MCF 10A (cell line): ENCODE measurements at regions of chr3 and their contacts with region 1.

Region 1: DNA sequence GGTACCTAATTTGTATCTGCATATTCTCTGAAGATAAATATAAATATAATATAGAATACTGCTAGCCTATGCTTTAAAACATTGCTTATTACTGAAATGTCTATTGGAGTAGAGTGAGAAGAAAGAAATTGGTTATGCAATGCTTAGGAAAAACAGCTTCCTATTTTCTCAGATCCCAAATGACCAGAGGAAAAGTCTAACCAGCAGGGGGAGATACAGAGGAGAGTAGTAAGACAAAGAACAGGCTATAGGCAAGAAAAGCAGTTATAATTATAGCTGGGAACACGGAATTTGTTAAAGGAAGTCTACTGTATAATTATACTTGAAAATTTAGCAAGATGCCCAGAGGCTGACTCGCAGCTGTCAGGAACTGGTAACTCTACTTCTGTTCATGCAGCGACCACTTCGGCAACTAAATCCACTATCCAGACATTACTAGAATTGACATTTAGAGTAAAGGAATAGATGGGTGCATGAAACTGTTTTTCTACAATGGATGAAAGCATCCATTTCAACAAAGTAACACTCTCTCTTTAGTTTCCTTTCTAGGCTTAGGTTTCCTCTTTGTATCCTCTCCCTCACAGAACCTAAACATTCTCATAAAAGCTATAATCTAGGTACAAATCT is 97.2 kb downstream of the TBC1D5 start:
- DNase-seq: peak; percentile 81
- H3K4me3 Mint-ChIP-seq: no peak overlapping the region
- H3K27ac Mint-ChIP-seq: no peak overlapping the region
- H3K4me1 Mint-ChIP-seq: no peaks in the 10 kb centered on the region
- H3K27me3 Mint-ChIP-seq: no peaks in the 10 kb centered on the region
- CTCF ChIP-seq: peak; percentile 56

Region 2: DNA sequence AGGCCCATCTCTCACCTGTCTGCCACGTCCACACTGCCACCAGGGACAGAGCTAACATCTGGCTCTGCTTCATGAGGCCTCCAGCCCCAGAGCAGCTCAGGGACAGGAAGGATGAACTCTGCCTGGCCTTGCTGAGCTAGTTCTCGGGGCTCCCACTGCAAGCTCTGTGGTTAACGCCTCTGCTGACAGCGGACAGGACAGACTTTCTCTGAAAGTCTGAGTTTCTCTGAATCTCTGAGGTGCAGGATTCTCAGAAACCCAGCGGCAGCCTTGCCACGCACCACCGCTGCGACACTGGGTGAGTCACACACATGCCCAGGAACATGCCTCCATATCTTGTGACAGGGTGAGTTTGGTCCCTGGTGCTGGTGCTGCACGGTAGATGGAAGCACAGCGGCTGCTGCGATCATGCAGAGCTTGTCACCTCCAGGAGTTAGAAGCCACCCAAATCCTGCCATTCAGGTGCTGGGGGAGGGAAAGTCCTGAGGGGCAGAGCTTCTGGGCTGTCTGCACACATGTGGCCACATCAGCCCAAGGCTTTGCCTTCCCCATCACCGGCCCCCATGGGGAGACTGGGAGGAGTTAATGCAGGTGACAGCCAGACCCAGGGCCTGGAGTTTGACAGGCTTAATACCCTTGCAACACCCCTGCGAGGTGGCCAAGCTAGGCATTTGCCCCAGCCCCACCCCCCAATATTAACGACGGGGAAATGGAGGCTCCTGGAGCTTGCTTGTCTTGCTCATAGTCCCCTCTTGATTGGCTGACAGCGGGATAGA is 493.4 kb before region 1 on chr3:
- CTCF ChIA-PET with region 1: no interaction called
- POLR2A ChIA-PET with region 1: no interaction called
- intact Hi-C with region 1: no loop called
- DNase-seq: no peak
- H3K4me3 Mint-ChIP-seq: no peak overlapping the region
- H3K27ac Mint-ChIP-seq: no peak overlapping the region
- H3K4me1 Mint-ChIP-seq: no peaks in the 10 kb centered on the region
- H3K27me3 Mint-ChIP-seq: no peaks in the 10 kb centered on the region
- CTCF ChIP-seq: no peak

Region 3: GRCh38 chr3:17456046-17456445 is 189.1 kb before region 1 on chr3:
- CTCF ChIA-PET with region 1: no interaction called
- POLR2A ChIA-PET with region 1: no interaction called
- intact Hi-C with region 1: no loop called
- DNase-seq: no peak
- H3K4me3 Mint-ChIP-seq: no peak overlapping the region
- H3K27ac Mint-ChIP-seq: peak overlapping the region; percentile 35
- H3K4me1 Mint-ChIP-seq: no peaks in the 10 kb centered on the region
- H3K27me3 Mint-ChIP-seq: no peaks in the 10 kb centered on the region
- CTCF ChIP-seq: no peak

Region 4: DNA sequence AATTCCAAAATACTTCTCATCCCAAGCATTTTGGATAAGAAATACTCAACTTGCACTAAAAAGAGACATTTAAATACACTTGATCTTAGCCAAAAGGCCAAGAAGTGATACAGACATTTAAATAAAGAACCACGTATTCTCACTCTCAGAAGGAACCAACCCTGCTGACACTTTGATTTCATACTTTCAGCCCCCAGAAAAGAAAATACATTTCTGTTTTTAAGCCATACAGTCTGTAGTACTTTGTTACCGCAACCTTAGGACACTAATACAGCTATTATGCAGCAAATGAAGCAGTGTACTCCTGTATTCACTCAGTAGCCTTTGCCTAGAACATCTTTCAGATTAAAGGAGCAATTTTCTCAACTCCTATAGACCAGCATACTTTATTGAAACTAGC is 10.6 kb after region 1 on chr3:
- CTCF ChIA-PET with region 1: interaction called, 22 read pairs
- POLR2A ChIA-PET with region 1: interaction called, 4 read pairs
- intact Hi-C with region 1: no loop called
- DNase-seq: no peak
- H3K4me3 Mint-ChIP-seq: no peak overlapping the region
- H3K27ac Mint-ChIP-seq: no peak overlapping the region
- H3K4me1 Mint-ChIP-seq: peaks cover 5% of the 10 kb centered on the region
- H3K27me3 Mint-ChIP-seq: no peaks in the 10 kb centered on the region
- CTCF ChIP-seq: no peak

Region 5: GRCh38 chr3:17974206-17974841 is 329.1 kb after region 1 on chr3:
- CTCF ChIA-PET with region 1: no interaction called
- POLR2A ChIA-PET with region 1: no interaction called
- intact Hi-C with region 1: no loop called
- DNase-seq: no peak
- H3K4me3 Mint-ChIP-seq: no peak overlapping the region
- H3K27ac Mint-ChIP-seq: no peak overlapping the region
- H3K4me1 Mint-ChIP-seq: no peaks in the 10 kb centered on the region
- H3K27me3 Mint-ChIP-seq: no peaks in the 10 kb centered on the region
- CTCF ChIP-seq: no peak